CD4-positive, alpha-beta T cell (primary cell): ENCODE measurements at regions of chr14 and their contacts with region 1.

Region 1: DNA sequence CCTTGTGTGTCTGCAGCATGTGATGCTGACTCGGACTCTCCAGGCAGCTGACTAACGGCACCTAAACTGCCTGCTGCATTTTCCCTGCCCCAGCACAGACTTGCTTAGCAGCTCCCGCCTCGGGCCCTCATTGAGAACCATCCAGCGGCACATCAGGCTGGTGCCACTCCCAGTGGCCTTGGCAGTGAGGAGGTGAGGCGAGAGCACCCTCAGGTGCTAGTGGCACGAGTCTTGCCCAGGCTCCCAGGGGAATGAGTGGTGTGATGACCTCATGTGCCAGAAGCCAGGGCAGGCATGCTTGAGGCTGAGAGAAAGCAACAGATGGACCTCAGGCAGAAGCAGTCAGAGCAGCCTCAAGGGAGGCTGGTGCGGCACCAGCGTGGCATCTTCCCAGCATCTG is 60.2 kb downstream of the PRKCH start:
- DNase-seq: no peak
- ATAC-seq: no peak
- H3K4me3 ChIP-seq: no peak overlapping the region
- H3K4me3 Mint-ChIP-seq: peak overlapping the region; percentile 47
- H3K27ac ChIP-seq: peak overlapping the region; percentile 14 to 38
- H3K27ac Mint-ChIP-seq: no peak overlapping the region
- H3K4me1 ChIP-seq: peaks cover 87% of the 10 kb centered on the region
- H3K4me1 Mint-ChIP-seq: no peaks in the 10 kb centered on the region
- H3K27me3 ChIP-seq: no peaks in the 10 kb centered on the region
- H3K27me3 Mint-ChIP-seq: no peaks in the 10 kb centered on the region
- CTCF ChIP-seq: no peak

Region 2: GRCh38 chr14:61296719-61297502 is 84.6 kb before region 1 on chr14:
- CTCF ChIA-PET with region 1: no interaction called
- POLR2A ChIA-PET with region 1: no interaction called
- intact Hi-C with region 1: loop called (anchors 1 to 5 kb)
- DNase-seq: peak in 4 of 14 experiments; percentile 23 to 80 (median 75)
- ATAC-seq: peak; percentile 76
- H3K4me3 ChIP-seq: no peak overlapping the region
- H3K4me3 Mint-ChIP-seq: no peak overlapping the region
- H3K27ac ChIP-seq: no peak overlapping the region
- H3K27ac Mint-ChIP-seq: no peak overlapping the region
- H3K4me1 ChIP-seq: peaks cover 18% of the 10 kb centered on the region
- H3K4me1 Mint-ChIP-seq: peaks cover 56% of the 10 kb centered on the region
- H3K27me3 ChIP-seq: no peaks in the 10 kb centered on the region
- H3K27me3 Mint-ChIP-seq: no peaks in the 10 kb centered on the region
- CTCF ChIP-seq: peak; percentile 77

Region 3: DNA sequence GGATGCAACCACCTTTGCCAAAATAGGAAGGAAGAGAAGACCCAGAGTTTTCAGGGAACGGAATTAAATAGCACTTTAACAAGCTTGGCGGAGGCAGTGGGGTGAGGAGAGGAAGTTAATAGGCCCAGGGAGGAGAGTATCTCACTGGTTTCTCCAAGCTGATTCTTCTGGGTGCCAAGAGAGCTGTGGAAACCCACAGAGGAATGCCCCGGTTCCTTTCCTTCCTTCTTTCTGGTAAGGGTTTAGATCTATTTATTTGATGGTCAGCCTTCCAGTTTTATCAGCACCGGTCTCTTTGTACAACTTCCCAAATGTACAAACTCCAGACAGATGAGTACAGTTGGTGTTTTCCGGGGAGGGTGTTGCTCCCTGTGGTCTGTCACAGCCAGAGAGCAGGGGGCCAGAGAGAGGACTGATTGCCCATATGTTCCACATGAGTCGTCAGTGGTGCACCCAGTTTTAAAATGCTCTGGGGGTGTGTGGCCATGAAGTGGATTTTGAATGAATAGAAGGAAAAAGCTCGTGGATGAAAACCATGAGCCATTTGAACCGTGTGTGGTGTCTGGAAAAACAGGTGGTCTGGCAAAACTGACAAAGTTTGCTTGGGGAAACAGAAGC is 33.6 kb before region 1 on chr14:
- CTCF ChIA-PET with region 1: interaction called, 4 read pairs
- POLR2A ChIA-PET with region 1: interaction called, 5 read pairs
- intact Hi-C with region 1: loop called in 1 of 2 experiments (anchors 2 kb)
- DNase-seq: peak in 2 of 14 experiments; percentile 45 to 52
- ATAC-seq: no peak
- H3K4me3 ChIP-seq: peak overlapping the region; percentile 44
- H3K4me3 Mint-ChIP-seq: peak overlapping the region; percentile 83
- H3K27ac ChIP-seq: peak overlapping the region; percentile 67 to 88
- H3K27ac Mint-ChIP-seq: peak overlapping the region; percentile 99
- H3K4me1 ChIP-seq: peaks cover 87% of the 10 kb centered on the region
- H3K4me1 Mint-ChIP-seq: peaks cover 97% of the 10 kb centered on the region
- H3K27me3 ChIP-seq: no peaks in the 10 kb centered on the region
- H3K27me3 Mint-ChIP-seq: no peaks in the 10 kb centered on the region
- CTCF ChIP-seq: no peak

Region 4: DNA sequence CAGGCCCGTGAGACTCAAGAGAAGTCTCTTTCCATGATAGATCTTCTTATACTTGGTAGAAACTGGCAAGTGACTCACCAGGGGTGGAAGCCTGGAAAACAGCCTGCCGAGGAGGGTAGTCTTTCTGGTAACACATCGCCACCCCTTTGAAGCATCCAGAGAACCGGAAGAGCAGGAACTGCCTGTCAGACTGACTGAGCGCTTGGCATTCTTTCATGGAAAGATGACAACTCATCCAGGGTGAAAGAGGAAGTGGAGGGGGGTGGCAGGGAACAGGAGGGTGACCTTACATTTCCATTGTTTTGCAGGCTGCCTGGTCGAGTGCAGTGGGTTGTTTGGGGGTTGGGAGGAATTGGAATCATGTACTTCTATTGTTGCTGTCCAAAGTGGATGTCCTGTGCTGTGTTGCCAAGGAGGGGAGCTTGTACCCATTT is 25.6 kb before region 1 on chr14:
- CTCF ChIA-PET with region 1: no interaction called
- POLR2A ChIA-PET with region 1: interaction called, 5 read pairs
- intact Hi-C with region 1: loop called in 1 of 2 experiments (anchors 2 kb)
- DNase-seq: peak in 8 of 14 experiments; percentile 39 to 67 (median 52)
- ATAC-seq: peak; percentile 80
- H3K4me3 ChIP-seq: no peak overlapping the region
- H3K4me3 Mint-ChIP-seq: peak overlapping the region; percentile 81
- H3K27ac ChIP-seq: peak overlapping the region in 1 of 2 donors; percentile 7
- H3K27ac Mint-ChIP-seq: peak overlapping the region; percentile 99
- H3K4me1 ChIP-seq: peaks cover 71% of the 10 kb centered on the region
- H3K4me1 Mint-ChIP-seq: peaks cover 98% of the 10 kb centered on the region
- H3K27me3 ChIP-seq: no peaks in the 10 kb centered on the region
- H3K27me3 Mint-ChIP-seq: no peaks in the 10 kb centered on the region
- CTCF ChIP-seq: no peak

Region 5: GRCh38 chr14:61362075-61362750 is 19.3 kb before region 1 on chr14:
- CTCF ChIA-PET with region 1: interaction called, 7 read pairs
- POLR2A ChIA-PET with region 1: interaction called, 5 read pairs
- intact Hi-C with region 1: loop called (anchors 2 kb)
- DNase-seq: no peak
- ATAC-seq: no peak
- H3K4me3 ChIP-seq: no peak overlapping the region
- H3K4me3 Mint-ChIP-seq: no peak overlapping the region
- H3K27ac ChIP-seq: peak overlapping the region in 1 of 2 donors; percentile 10
- H3K27ac Mint-ChIP-seq: no peak overlapping the region
- H3K4me1 ChIP-seq: peaks cover 76% of the 10 kb centered on the region
- H3K4me1 Mint-ChIP-seq: peaks cover 42% of the 10 kb centered on the region
- H3K27me3 ChIP-seq: no peaks in the 10 kb centered on the region
- H3K27me3 Mint-ChIP-seq: no peaks in the 10 kb centered on the region
- CTCF ChIP-seq: no peak